ENCODE measurements at regions of chr14 and their contacts with region 1.

Region 1: DNA sequence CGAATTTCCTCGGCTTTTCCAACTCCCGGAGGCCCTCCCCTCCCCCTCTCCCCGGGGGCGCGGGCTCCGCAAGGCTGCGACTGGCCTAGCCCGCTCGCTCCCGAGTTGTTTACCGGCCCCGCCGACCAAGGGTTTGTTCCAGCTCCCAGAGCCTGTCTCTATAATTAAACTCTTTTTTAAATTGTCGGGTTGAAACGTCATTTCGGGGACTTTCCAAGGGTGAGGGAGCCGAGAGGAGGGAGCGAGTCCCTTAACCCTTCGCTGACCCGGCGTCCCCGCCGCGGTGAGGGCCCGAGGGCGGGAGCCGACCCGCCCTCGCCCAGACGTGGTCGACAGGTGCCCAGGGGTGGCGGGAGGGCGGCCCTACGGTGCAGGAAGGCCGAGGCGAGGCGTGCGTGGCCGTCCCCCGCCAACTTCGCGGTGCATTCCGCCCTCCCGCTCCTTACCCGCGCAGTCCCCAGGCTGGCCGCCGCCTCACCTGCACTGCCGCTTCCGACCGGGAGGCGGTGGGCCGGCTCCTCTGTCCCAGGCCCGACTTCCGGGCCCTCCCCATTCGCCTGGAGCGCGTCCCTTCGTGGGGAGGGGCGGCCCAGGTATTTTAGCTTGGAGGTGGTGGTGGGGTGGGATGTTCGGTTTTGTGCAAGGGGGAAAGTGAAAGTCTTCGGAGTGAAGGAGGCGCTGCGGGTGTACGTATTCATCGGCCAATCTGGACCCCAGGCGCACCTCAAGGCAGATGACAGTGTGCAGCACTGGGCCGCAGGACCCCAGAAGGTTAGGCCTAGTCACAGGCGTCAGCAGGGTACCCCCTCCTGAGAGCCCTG is 2.9 kb upstream of the ZFP36L1 start:
- DNase-seq: peak; percentile 92
- ATAC-seq: peak; percentile 61

Region 2: GRCh38 chr14:68392393-68393141 is 403.2 kb before region 1 on chr14:
- intact Hi-C with region 1: loop called (anchors 5 kb)
- DNase-seq: peak; percentile 81
- ATAC-seq: peak; percentile 57

Region 3: DNA sequence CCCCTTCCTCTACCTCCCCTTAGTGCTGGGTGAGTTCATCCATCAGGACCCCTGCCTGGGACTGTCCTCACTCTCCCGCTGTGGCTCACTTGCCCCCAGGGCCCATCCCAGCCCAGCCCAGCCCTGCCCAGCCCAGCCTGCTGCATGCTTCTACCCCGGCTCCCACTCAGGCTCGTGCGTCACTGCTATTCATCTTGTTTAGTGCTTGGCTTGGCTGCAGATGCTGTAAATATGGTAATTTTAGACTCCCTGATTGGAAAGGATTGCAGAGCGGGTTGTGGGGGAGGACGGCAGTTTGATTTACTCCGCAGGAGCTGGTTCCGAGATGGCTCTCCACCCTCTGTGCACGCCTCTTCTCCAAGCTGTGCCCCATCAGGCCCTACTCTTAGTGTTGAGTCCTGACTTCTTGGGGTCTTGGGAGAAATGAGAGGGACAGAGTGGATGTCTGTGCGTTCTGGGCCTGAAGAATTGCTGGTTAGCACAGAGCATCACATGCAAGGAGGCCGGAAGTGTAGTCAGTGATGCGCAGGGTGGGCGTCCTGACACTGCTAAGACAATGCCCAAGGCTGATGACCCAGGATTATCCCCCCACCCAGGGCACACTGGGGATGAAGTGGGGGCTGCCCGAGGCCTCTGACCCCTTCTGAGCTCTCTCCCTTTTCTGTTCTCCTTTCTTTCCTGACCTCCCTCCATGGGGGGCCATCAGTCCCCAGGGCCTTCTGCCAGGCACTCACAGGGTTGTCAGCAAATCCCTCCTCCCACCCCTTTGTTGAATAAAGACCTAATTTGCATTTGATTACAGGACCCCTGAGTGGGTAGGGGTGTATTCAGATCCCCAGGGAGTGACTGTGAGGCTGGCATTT is 247.4 kb before region 1 on chr14:
- intact Hi-C with region 1: loop called (anchors 2 kb)
- DNase-seq: peak; percentile 91
- ATAC-seq: peak; percentile 89

Region 4: GRCh38 chr14:68621400-68622365 is 174.1 kb before region 1 on chr14:
- intact Hi-C with region 1: loop called (anchors 5 kb)
- DNase-seq: peak; percentile 81
- ATAC-seq: peak; percentile 74

Region 5: DNA sequence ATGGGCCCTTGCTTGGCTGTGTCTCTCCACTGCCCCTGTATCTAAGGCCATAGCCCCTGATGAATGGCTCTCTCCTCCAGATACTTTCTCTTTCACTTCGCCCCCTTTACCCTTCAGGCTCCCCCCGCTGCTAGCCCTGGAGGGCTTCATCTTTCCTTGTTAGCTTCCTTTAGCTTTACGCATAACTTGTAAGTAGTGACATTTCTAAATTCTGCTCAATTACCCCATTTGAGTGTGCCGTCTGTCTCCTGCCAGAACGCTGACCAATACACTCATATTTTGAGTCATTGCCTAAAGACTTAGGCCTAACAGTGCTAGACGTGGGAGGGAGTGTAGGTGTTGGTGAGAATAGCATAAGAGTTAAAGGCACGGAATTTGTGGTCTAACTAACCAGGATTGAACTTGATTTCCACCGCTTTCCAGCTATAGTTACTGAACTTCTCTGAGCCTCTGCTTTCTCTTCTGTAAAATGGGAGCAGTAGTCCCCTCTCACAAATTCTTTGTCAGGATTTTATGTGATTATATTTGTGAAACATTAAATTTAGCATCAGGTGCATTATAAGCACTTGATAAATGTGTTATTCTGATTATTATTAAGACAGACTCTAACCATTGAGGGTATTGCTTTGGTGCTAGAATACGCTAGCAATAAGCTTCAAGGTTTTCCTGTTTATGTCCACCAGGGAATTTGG is 132.3 kb before region 1 on chr14:
- intact Hi-C with region 1: loop called (anchors 10 kb)
- DNase-seq: no peak
- ATAC-seq: no peak

Region 6: GRCh38 chr14:68816262-68816942 is 20.6 kb after region 1 on chr14:
- intact Hi-C with region 1: loop called (anchors 1 kb)
- DNase-seq: peak; percentile 96
- ATAC-seq: peak; percentile 94

Region 7: DNA sequence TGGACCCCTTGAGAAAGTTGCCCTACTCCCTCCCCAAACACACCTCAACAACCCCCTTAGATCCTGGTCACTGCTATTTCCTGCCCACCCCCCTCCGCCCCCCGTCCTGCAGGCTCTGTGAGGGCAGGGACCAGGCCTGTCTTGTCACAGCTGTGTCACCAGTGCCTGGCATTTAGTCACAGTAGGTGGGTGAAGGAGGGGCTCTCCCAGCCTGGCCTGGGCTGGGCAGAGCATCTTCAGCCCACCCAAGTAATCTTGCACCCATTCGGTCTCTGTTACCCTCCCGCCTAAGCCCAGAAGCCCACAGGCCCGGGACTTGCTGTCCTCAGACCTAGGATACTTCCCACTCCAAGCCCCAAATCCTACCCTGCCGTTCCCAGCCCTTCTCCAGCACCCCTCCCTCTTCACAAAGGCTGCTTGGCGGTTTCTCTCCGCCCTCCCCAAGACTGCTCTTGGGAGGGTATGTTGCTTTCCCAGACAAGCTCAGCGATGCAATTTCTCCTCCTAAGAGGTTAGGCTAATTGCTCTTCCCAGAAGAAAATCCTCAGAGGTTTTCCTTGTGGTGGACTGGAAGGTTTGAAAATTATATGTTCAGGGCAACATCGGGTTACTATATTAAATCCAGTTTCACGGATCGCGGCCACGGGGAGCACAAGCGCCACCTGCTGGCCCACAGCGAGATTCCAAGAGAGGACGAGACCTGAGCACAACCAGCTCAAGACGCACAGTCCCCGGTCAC is 47.8 kb after region 1 on chr14:
- intact Hi-C with region 1: no loop called
- DNase-seq: peak; percentile 87
- ATAC-seq: peak; percentile 83

Region 8: DNA sequence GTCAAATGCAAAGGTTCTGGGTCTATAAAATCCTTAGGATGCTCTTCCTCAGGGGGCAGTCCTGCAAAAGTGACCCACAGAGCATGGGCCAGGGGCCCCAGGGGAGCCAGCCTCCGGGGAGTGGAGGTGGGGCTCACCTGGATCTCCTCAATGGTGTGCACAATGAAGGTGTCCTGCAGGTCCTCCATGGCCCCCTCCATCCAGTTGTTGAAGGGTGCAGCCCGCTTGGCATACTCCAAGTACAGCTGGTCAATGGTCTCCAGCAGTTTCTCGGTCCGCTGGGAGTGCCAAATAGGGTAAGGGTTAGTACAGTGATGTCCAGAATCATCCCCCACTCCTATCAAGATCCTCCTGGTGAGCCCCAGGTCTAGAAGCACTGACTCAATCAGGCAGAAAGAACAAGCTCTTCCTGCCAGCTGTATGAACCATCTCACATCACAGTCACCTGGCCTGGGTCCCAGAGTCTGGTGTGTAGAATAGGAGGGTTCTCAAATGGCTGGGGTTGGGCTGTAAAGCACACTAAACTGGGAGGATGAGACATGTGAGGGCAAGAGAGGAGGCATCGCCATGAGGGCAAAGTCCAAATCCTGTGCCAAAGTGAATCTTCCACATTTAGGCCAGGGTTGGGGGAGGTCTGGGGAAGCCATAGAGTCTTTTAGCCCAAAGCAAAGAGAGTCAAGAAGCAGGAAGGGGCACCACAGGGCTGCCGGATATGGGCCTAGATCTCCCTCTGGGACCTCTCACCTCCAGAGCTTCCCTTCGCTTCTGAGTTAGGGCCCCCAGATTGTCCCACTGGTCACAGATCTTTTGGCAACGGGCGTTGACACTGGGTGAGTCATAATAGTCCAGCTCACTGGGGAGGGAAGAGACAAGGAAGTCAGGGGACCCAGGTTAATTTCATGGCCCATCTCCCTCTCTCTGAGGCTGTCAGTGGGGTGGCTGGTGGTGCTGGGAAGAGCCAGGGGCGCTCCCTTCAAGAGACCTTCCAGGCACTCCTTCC is 88.5 kb after region 1 on chr14:
- intact Hi-C with region 1: no loop called
- DNase-seq: peak; percentile 80
- ATAC-seq: peak; percentile 74

Region 9: DNA sequence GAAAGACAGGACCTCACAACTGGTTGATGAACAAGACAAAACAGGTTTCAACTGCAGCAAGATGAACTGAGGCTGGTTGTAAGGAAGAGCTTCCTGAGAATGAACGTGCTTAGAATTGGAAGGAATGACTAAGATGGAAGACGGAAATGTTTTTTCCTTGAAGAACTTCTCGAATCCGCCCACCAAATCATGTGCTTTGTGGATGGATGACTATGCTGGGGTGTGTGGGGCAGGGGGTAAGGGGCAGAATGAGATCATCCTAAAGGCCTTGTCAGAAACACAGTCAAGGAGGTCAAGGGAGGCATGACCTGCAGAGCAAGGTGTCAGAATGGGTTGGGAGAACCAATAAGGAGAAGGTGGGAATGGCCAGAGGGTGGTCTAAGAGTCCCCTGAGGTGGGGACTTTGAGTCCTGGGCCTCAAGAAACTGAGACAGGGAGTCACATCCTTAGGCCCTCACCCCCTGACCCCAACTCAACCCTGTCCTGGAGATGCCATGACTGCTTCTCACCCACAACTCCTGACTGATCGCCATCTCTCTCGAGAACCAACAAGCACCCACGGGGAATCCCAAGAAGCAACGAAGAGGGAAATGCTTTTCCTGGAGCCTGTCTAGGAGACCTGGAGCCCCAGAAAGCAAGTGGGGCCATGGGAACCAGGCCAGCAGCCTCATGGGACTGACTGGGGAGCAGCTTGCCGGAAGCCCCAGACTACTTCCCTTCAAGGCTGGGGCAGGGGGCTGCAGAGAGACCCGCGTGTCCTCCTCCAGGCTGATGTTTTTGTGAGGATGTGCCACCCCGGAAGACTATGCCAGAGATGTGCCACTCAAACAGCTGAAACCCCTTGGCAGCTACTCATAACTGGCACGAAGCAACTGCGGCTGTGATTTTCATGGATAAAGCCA is 99.2 kb after region 1 on chr14:
- intact Hi-C with region 1: no loop called
- DNase-seq: no peak
- ATAC-seq: no peak

Measured in Right ventricle myocardium inferior (tissue), 1 donor.